Panc1 (cell line): ENCODE measurements at regions of chr19 and their contacts with region 1.

Region 1: GRCh38 chr19:47075179-47075810 is 26.9 kb upstream of the TMEM160 start:
- DNase-seq: no peak
- ATAC-seq: no peak
- H3K4me3 ChIP-seq: no peak overlapping the region
- H3K27ac ChIP-seq: no peak overlapping the region
- H3K4me1 ChIP-seq: peaks cover 6% of the 10 kb centered on the region; the same call in 1 of the 2 replicates
- H3K27me3 ChIP-seq: no peaks in the 10 kb centered on the region
- CTCF ChIP-seq: no peak

Region 2: DNA sequence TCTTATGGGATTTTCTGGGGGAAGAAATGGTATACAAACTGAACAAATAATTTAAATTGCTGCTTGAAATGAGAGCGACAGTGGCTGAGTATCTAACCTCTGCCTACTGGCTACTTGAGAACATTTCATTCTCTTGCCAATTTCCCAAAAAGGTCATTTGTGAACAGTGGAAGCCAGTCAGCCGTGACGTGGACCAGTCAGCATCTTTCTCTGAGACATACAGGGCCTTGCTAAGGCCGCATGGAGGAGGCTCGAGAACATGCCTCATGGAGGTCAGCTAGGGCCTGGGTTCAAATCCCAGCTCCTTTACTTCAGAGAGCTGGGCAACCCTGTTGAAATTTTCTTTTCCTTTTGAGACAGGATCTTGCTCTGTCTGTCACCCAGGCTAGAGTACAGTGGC is 18.0 kb after region 1 on chr19:
- CTCF ChIA-PET with region 1: no interaction called
- POLR2A ChIA-PET with region 1: no interaction called
- in situ Hi-C with region 1: no loop called
- intact Hi-C with region 1: no loop called
- DNase-seq: no peak
- ATAC-seq: no peak
- H3K4me3 ChIP-seq: no peak overlapping the region
- H3K27ac ChIP-seq: no peak overlapping the region
- H3K4me1 ChIP-seq: peaks cover 3% of the 10 kb centered on the region; the same call in 1 of the 2 replicates
- H3K27me3 ChIP-seq: no peaks in the 10 kb centered on the region
- CTCF ChIP-seq: no peak

Region 3: DNA sequence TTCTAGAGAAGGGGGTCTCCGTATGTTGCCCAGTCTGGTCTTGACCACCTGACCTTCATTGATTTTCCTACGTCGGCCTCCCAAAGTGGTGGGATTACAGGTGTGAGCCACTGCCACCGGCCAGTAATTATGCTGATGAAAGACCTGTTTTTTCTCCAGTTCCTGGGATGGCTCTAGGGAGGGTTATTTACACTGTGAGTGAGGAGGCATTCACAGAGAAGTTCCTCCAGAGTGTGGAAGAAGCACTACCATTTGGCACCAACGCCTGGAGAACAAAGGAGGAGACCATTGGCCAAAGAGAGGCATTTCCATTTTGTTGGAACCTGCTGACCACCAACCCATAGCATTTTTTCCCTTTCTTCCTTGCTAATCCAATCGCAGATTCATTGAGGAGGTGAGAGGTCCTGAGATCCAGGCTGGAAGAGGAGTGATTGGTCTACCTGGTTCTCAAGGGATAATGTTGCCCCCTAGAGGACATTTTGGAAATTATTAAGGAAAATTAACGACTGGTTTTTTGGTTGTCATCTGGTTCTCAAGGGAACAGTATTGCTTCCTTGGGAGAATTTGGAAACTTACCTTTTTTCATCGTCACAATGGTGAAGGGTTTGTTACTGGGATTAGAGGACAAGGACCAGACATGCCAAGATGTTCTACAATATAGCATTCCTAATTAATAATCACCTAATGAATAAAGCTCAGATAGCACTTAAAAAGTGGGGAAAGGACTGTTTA is 49.8 kb after region 1 on chr19:
- CTCF ChIA-PET with region 1: interaction called, 4 read pairs
- POLR2A ChIA-PET with region 1: no interaction called
- in situ Hi-C with region 1: no loop called
- intact Hi-C with region 1: loop called (anchors 5 kb)
- DNase-seq: no peak
- ATAC-seq: peak; percentile 79
- H3K4me3 ChIP-seq: no peak overlapping the region
- H3K27ac ChIP-seq: 0 out of 2 replicates have a peak overlapping the region, but pooled peaks have one; percentile 21
- H3K4me1 ChIP-seq: peaks cover 19% of the 10 kb centered on the region
- H3K27me3 ChIP-seq: no peaks in the 10 kb centered on the region
- CTCF ChIP-seq: peak; percentile 71